Heart right ventricle (tissue), 16 donors: ENCODE measurements at regions of chr11 and their contacts with region 1.

Region 1: DNA sequence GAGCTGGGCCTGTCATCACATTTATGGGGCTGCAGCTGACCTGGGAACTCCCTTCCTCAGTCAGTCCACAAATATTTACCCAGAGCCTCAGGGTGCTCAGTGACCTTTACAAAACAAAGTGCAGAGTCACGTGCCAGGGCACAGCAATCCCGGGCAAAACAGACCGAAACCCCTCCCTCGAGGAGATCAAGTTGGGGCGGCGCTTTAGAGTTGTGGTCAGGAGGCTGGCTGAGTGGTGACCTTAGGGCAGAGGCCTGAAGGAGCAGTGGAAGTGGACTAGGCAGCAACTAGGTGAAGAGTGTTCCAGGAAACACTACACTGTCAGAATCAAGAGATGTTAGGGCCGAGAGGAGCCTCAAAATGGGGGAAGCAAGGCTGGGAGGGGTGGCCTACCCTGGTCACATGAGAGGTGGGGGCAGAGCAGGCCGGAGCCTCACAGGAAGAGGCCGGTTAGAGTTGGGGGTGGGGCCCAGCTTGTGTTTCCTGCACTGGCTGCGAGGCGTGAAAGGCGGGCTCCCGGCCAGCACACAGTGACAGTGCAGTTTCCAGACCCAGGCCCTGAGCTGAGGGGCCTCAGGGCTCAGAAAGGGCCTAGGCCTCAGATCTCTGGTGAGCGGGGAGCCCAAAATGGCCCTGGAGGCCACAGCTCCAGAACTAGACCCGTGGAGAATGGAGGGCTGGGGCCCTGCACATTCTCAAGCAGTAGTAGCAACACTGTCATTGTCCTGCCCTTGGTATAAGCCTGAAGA is 3.7 kb upstream of the NEAT1 start:
- DNase-seq: peak; percentile 97 to 99
- ATAC-seq: peak; percentile 44 to 66 (median 57)
- H3K4me3 ChIP-seq: peak overlapping the region; percentile 12 to 95 (median 74)
- H3K27ac ChIP-seq: peak overlapping the region; percentile 99 to 100 (median 100)
- H3K4me1 ChIP-seq: peaks cover 38 to 69% (median 66%) of the 10 kb centered on the region in 9 donors
- H3K27me3 ChIP-seq: no peaks in the 10 kb centered on the region
- CTCF ChIP-seq: no peak

Region 2: GRCh38 chr11:65366340-65366773 is 52.5 kb before region 1 on chr11:
- intact Hi-C with region 1: loop called in 2 of 10 experiments (anchors 5 kb)
- DNase-seq: peak in 1 of 2 donors; percentile 50
- ATAC-seq: peak; percentile 53 to 73 (median 69)
- H3K4me3 ChIP-seq: no peak overlapping the region
- H3K27ac ChIP-seq: peak overlapping the region in 9 of 10 donors; percentile 13 to 68 (median 45)
- H3K4me1 ChIP-seq: peaks cover 0 to 33% (median 19%) of the 10 kb centered on the region in 9 donors
- H3K27me3 ChIP-seq: no peaks in the 10 kb centered on the region
- CTCF ChIP-seq: peak; percentile 64 to 84 (median 82)

Region 3: DNA sequence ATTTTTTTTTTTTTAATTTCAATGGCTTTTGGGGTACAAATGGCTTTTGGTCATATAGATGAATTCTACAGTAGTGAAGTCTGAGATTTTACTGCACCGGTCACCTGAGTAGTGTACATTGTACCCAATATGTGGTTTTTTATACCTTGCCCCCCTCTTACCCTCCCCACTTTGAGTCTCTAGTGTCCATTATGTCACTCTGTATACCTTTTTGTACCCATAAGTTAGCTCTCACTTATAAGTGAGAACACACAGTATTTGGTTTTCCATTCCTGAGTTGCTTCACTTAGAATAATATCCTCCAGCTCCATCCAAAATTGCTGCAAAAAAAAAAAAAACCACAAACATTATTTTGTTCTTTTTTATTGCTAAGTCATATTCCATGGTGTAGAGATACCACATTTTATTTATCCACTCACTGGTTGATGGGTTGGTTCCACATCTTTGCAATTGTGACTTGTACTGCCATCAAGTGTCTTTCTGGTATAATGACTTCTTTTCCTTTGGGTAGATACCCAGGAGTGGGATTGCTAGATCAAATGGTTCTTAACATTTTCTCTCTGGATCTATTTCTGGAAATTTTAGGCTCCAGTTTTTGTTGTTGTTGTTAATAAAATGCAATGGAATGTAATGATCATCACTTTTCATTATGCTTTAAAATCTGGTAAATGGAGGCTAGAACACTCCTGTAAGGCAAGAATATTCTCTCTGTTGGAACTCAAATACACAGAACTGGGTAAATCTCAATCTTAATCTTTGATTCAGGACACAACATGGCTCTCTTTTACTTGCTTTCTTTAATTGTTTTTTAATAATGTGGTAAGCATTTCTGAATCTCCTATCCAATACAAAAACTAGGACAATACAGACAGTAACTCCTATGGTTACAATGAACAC is 14.0 kb after region 1 on chr11:
- intact Hi-C with region 1: loop called in 1 of 10 experiments (anchors 2 kb)
- DNase-seq: no peak
- ATAC-seq: no peak
- H3K4me3 ChIP-seq: peak overlapping the region in 6 of 10 donors; percentile 20 to 95 (median 83)
- H3K27ac ChIP-seq: peak overlapping the region in 5 of 10 donors; percentile 9 to 100 (median 49)
- H3K4me1 ChIP-seq: peaks cover 14 to 99% (median 97%) of the 10 kb centered on the region in 9 donors
- H3K27me3 ChIP-seq: no peaks in the 10 kb centered on the region
- CTCF ChIP-seq: peak in 4 of 9 donors; percentile 32 to 46 (median 36)

Region 4: DNA sequence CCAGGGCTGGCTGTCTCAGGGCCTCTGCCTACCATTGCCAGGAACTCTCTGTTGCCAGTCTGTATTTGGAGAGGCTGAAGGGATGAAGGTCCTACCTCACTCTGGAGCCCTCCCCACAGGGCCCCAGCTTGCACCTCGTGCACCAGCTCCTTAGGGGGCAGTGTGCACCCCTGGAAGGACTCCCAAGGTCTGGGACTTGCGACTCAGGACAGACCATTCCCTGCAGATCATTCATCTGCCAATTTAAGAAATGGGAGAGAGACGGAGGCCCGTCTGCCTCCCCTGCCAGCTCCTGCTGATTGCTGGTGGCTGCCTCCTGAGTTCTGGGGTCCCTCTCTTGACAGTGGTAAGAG is 52.5 kb after region 1 on chr11:
- intact Hi-C with region 1: loop called in 7 of 10 experiments (anchors 2 to 10 kb)
- DNase-seq: peak; percentile 81 to 85
- ATAC-seq: peak; percentile 85 to 94 (median 90)
- H3K4me3 ChIP-seq: peak overlapping the region in 9 of 10 donors; percentile 10 to 44 (median 33)
- H3K27ac ChIP-seq: peak overlapping the region; percentile 86 to 100 (median 98)
- H3K4me1 ChIP-seq: peaks cover 16 to 57% (median 41%) of the 10 kb centered on the region in 9 donors
- H3K27me3 ChIP-seq: no peaks in the 10 kb centered on the region
- CTCF ChIP-seq: peak; percentile 49 to 84 (median 72)

Region 5: GRCh38 chr11:65497141-65498041 is 78.5 kb after region 1 on chr11:
- intact Hi-C with region 1: loop called in 7 of 10 experiments (anchors 1 to 5 kb)
- DNase-seq: peak; percentile 99
- ATAC-seq: peak; percentile 77 to 93 (median 85)
- H3K4me3 ChIP-seq: peak overlapping the region; percentile 68 to 88 (median 84)
- H3K27ac ChIP-seq: peak overlapping the region; percentile 97 to 100 (median 99)
- H3K4me1 ChIP-seq: peaks cover 34 to 56% (median 47%) of the 10 kb centered on the region in 9 donors
- H3K27me3 ChIP-seq: no peaks in the 10 kb centered on the region
- CTCF ChIP-seq: no peak

Region 6: DNA sequence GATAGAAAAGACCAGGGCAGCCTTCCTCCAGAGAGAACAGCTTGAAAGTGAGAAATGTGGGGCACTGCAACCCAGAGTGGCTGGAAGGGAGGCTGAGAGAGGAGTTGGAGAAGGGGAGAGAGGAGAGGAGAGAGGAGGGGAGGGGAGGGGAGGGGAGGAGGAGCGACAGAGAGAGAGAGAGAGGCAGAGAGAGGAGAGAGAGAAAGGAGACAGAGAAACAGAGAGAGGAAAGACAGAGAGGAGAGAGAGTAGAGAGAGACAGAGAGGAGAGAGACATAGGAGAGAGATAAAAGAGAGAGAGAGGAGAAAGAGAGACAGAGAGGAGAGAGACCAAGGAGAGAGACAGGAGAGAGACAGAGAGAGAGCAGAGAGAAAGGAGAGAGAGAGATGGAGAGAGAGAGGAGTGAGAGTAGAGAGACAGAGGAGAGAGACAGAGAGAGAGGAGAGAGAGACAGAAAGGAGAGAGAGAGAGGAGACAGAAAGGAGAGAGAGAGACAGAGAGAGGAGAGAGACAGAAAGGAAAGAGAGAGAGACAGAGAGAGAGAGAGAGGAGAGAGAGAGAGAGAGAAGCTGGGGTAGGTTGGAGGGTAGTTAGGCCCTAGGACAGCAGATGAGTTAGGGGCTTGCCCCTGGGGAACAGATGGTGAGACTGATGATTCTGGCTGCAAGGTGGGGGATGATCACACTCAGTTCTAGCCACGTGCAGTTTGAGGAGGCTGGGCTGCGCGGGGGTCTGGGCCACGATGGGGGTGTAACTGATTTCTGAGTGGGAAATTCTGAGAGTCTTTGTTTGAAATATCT is 97.5 kb after region 1 on chr11:
- intact Hi-C with region 1: loop called in 6 of 10 experiments (anchors 1 to 2 kb)
- DNase-seq: no peak
- ATAC-seq: peak in 1 of 8 donors; percentile 16
- H3K4me3 ChIP-seq: no peak overlapping the region
- H3K27ac ChIP-seq: no peak overlapping the region
- H3K4me1 ChIP-seq: no peaks in the 10 kb centered on the region
- H3K27me3 ChIP-seq: no peaks in the 10 kb centered on the region
- CTCF ChIP-seq: no peak